WTC11 (cell line): ENCODE measurements at regions of chr9 and their contacts with region 1.

Region 1: GRCh38 chr9:124309665-124310064 is 51.9 kb downstream of the NEK6 start:
- DNase-seq: no peak
- ATAC-seq: peak; percentile 23
- H3K4me3 Mint-ChIP-seq: no peak overlapping the region
- H3K27ac Mint-ChIP-seq: no peak overlapping the region
- H3K4me1 Mint-ChIP-seq: peaks cover 5% of the 10 kb centered on the region; the same call in 1 of the 2 replicates
- H3K27me3 Mint-ChIP-seq: no peaks in the 10 kb centered on the region
- CTCF ChIP-seq: no peak

Region 2: GRCh38 chr9:124320062-124320973 is 10.7 kb after region 1 on chr9:
- CTCF ChIA-PET with region 1: interaction called, 19 read pairs
- POLR2A ChIA-PET with region 1: no interaction called
- DNase-seq: peak; percentile 86
- ATAC-seq: peak; percentile 92
- H3K4me3 Mint-ChIP-seq: no peak overlapping the region
- H3K27ac Mint-ChIP-seq: no peak overlapping the region
- H3K4me1 Mint-ChIP-seq: 0 out of 2 replicates have a peak, but pooled peaks cover 3% of the 10 kb centered on the region
- H3K27me3 Mint-ChIP-seq: no peaks in the 10 kb centered on the region
- CTCF ChIP-seq: peak; percentile 66

Region 3: GRCh38 chr9:124334568-124335319 is 25.1 kb after region 1 on chr9:
- CTCF ChIA-PET with region 1: no interaction called
- POLR2A ChIA-PET with region 1: no interaction called
- DNase-seq: no peak
- ATAC-seq: no peak
- H3K4me3 Mint-ChIP-seq: no peak overlapping the region
- H3K27ac Mint-ChIP-seq: no peak overlapping the region
- H3K4me1 Mint-ChIP-seq: peaks cover 4% of the 10 kb centered on the region
- H3K27me3 Mint-ChIP-seq: no peaks in the 10 kb centered on the region
- CTCF ChIP-seq: no peak

Region 4: DNA sequence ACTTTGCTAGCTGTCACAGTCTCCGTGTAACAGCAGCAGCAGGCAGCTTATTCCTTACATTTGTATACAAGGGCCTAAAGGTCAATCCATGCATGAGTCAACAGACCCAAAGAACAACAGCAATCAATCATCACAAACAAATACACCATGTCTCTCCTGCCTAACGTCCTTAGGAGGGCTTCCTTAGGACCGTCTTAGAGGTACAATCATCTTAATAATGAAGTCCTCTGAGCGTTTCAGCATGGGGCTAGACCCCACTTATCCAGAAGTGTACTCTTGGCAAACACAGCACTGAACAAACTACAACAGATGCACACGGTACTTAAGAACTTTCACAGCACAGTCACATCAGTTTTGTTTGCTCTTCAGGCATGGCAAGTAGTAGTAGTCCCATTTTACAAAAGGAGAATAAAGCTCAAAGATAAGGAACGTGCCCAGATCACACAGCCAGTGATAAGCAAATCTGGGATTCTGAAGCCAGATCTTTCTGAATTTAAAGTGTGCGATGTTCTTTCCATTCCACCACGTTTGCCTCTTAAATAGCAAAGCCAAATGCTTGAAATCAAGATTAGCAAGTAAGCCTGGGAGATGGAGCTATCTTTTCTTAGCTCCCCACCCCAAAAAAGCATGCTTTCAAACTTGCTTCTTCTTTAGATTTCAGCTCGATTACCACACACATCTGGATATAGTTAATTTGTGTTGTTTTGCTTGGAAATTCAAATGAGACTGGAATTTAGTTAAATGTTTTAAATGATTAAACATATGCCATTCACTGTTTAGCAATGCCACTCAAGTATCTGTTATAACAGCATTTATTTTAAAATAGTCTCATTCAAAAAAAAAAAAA is 81.4 kb after region 1 on chr9:
- CTCF ChIA-PET with region 1: no interaction called
- POLR2A ChIA-PET with region 1: no interaction called
- DNase-seq: no peak
- ATAC-seq: no peak
- H3K4me3 Mint-ChIP-seq: no peak overlapping the region
- H3K27ac Mint-ChIP-seq: peak overlapping the region; percentile 40; the same call in 1 of the 2 replicates
- H3K4me1 Mint-ChIP-seq: peaks cover 59% of the 10 kb centered on the region
- H3K27me3 Mint-ChIP-seq: no peaks in the 10 kb centered on the region
- CTCF ChIP-seq: no peak

Region 5: DNA sequence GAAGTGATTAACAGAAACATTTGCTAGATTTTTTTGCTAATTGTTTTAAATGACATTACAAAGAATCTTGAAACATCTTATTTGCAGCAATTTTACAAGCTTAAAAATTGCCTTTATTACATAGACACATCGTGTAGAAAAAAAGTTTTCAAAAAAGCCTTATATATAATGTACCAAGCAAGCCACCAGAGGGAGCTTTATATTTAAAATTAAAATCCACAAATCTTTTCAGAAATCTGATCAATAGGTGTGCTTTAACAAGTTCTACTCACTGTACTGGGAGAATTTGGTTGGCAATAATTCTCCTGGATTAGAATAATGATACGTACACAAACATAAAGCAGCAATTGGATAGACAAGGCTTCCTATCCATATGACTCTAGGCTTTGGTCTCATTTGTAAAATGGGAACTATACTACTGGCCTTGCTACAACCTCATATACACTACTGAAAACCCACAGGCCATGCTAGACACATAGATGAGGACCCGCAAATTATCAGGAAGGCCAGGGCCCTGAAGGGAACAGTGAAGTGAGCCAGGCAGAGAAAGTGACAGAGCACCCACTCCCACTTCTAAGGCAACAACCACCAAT is 100.8 kb after region 1 on chr9:
- CTCF ChIA-PET with region 1: no interaction called
- POLR2A ChIA-PET with region 1: no interaction called
- DNase-seq: no peak
- ATAC-seq: no peak
- H3K4me3 Mint-ChIP-seq: no peak overlapping the region
- H3K27ac Mint-ChIP-seq: no peak overlapping the region
- H3K4me1 Mint-ChIP-seq: peaks cover 6% of the 10 kb centered on the region
- H3K27me3 Mint-ChIP-seq: no peaks in the 10 kb centered on the region
- CTCF ChIP-seq: no peak